Heart left ventricle (tissue), 16 donors: ENCODE measurements at regions of chrX and their contacts with region 1.

Region 1: DNA sequence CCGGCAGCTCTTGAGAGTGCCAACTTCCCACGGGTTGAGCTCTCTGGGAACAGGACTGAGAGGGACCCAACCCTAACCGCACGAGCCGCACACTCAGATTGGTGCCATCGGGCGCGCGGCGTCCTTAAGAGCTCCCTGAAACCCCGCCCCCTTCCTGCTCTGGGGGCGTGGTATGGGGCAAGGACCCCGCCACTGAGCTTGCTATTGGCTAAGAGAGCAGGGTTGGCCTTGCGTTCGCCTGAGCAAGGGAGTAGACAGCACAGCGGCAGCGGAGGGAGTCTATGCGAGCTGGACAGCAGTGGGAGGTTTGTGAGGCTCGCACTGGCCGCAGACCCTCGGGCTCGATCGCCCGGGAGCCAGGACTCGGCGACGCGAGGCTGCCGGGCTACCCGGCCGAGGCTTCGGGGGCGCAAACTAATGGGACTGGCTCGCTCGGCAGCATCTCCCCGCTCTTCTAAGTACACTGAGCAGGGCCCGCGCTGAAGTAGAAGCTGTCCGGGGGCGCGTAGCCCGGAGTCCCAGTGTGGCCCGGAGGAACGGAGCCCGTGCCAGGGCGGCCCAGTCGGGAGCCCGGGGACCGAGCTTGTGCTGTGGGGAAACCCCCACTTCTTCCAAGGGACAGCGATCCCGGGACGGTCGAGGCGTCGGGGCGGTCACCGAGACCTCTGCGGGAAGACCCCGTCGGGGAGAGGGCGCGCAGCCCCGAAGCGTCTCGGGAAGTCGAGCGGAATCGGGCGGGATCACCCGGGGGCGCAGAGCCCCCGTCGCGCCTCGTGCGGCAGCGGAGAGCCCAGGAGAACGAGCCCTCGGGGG is at the start of gene EFNB1:
- DNase-seq: peak; percentile 91 to 95 (median 93)
- ATAC-seq: peak; percentile 93 to 96 (median 94)
- H3K4me3 ChIP-seq: peak within 1 kb of the TSS; percentile 63 to 98 (median 81)
- H3K27ac ChIP-seq: peak within 1 kb of the TSS; percentile 65 to 92 (median 85)
- H3K4me1 ChIP-seq: peaks cover 0 to 22% (median 4%) of the 10 kb centered on the region in 12 donors
- H3K27me3 ChIP-seq: peaks cover 0 to 25% (median 0%) of the 10 kb centered on the region in 9 donors
- CTCF ChIP-seq: no peak
- POLR2A ChIP-seq: peak; percentile 72 to 99
- total RNA-seq, gene EFNB1: 15.9 to 78.8 (median 23.1) TPM

Region 2: DNA sequence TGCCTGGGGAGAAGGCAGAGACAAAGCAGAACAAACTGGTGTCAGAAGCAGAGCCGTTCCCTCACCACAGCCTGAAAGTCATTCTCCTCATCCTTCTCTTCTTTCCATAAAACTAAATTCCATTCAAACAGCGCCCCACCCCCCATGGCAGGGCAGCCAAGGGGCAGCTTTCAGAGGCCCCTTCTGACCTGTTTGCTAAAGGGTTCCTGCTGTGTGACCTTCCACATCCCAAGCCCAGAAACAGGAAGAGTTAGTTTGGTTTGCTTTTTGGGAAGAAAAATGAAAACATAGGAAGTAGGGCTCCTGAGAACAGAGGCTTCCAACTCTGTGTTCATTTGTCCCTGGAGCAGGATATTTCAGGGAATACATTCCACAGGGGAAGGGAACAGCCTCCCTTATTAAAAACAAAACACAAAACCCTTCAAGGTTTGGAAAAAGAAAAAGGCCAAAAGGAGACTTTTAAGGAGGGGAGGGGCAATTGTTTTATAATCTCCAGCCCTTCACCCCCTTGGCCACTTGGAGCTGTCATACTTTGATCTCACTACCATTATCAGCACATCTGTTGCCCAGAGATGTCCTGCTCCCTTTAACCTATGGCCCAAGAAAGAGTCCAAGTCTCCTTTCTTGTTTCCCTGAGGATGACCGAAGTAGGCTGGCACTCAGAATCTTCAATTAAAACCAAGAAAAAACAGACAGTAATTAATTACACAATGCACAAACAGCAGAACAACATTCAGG is 156.2 kb before region 1 on chrX:
- intact Hi-C with region 1: no loop called
- DNase-seq: peak in 3 of 5 donors; percentile 27 to 63 (median 35)
- ATAC-seq: peak; percentile 47 to 76 (median 64)
- H3K4me3 ChIP-seq: no peak overlapping the region
- H3K27ac ChIP-seq: peak overlapping the region in 11 of 12 donors; percentile 14 to 56 (median 38)
- H3K4me1 ChIP-seq: peaks cover 0 to 30% (median 4%) of the 10 kb centered on the region in 12 donors
- H3K27me3 ChIP-seq: peaks cover 0 to 3% (median 0%) of the 10 kb centered on the region in 9 donors
- CTCF ChIP-seq: no peak
- POLR2A ChIP-seq: no peak

Region 3: GRCh38 chrX:68880846-68881552 is 52.1 kb after region 1 on chrX:
- intact Hi-C with region 1: loop called in 1 of 10 experiments (anchors 10 kb)
- DNase-seq: no peak
- ATAC-seq: peak in 1 of 4 donors; percentile 16
- H3K4me3 ChIP-seq: no peak overlapping the region
- H3K27ac ChIP-seq: no peak overlapping the region
- H3K4me1 ChIP-seq: peaks cover 0 to 7% (median 0%) of the 10 kb centered on the region in 12 donors
- H3K27me3 ChIP-seq: peaks cover 0 to 14% (median 0%) of the 10 kb centered on the region in 9 donors
- CTCF ChIP-seq: no peak
- POLR2A ChIP-seq: no peak

Region 4: DNA sequence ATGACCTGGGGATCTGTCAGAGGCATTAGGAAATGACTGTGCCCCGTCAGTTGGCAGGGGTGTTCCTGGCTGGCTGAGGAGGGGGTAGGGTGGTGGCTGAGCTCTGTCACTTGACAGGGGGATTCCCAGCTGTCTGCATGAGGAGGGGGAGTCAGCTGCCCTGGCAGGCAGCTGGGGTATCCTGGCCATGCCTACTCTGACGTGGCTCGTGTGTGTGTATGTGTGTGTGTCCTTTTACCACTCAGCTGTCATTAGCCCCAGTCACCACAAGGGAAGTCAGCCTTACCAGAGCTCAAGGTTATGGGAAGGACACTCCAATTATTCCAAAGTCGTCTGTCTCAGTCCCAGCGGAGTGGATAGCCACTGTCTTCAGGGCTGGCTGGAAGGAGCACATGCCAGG is 93.1 kb after region 1 on chrX:
- intact Hi-C with region 1: loop called in 2 of 10 experiments (anchors 5 to 10 kb)
- DNase-seq: peak in 1 of 5 donors; percentile 32
- ATAC-seq: peak; percentile 10 to 69 (median 46)
- H3K4me3 ChIP-seq: no peak overlapping the region
- H3K27ac ChIP-seq: no peak overlapping the region
- H3K4me1 ChIP-seq: peaks cover 0 to 4% (median 0%) of the 10 kb centered on the region in 12 donors
- H3K27me3 ChIP-seq: no peaks in the 10 kb centered on the region
- CTCF ChIP-seq: peak in 1 of 12 donors; percentile 13
- POLR2A ChIP-seq: no peak

Region 5: DNA sequence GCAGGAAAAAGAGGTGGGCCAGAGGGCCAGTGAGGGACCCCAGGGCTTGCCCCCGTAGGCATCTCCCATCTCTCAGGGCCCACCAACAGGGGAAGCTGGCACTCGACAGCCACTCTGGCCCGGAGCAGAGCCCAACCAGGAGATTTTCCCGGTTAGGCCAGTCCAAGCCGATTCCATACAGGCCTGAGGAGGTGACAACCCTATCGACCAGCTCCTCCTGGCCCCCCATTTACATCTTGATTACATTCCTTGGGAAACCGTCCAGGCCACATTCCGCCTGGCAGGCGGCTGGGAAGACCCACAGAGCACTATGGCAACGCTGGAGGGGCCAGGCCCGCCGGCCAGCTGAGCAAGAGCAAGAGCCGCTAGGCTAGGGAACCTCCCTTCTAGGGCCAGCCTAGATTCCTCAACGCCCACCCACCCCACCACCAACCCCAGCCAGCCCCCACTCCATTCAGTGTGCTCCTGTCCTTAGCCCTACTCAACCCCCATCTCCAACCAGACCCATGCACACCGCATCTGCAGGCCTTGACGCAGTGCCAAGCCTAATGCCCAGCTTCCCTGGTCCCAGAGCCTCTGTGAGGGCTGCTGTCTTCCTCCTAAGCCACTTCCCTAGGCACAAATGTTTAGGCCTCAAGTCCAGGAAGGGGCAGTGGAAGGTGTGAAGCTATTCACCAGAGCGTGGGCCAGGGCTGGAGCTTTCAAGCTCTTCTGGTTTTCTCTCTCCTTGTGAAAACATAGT is 161.1 kb after region 1 on chrX:
- intact Hi-C with region 1: loop called in 4 of 10 experiments (anchors 5 to 10 kb)
- DNase-seq: peak; percentile 41 to 63 (median 48)
- ATAC-seq: peak; percentile 72 to 87 (median 80)
- H3K4me3 ChIP-seq: no peak overlapping the region
- H3K27ac ChIP-seq: peak overlapping the region in 7 of 12 donors; percentile 20 to 57 (median 33)
- H3K4me1 ChIP-seq: peaks cover 0 to 34% (median 12%) of the 10 kb centered on the region in 12 donors
- H3K27me3 ChIP-seq: peaks cover 0 to 11% (median 0%) of the 10 kb centered on the region in 9 donors
- CTCF ChIP-seq: no peak
- POLR2A ChIP-seq: no peak

Region 6: DNA sequence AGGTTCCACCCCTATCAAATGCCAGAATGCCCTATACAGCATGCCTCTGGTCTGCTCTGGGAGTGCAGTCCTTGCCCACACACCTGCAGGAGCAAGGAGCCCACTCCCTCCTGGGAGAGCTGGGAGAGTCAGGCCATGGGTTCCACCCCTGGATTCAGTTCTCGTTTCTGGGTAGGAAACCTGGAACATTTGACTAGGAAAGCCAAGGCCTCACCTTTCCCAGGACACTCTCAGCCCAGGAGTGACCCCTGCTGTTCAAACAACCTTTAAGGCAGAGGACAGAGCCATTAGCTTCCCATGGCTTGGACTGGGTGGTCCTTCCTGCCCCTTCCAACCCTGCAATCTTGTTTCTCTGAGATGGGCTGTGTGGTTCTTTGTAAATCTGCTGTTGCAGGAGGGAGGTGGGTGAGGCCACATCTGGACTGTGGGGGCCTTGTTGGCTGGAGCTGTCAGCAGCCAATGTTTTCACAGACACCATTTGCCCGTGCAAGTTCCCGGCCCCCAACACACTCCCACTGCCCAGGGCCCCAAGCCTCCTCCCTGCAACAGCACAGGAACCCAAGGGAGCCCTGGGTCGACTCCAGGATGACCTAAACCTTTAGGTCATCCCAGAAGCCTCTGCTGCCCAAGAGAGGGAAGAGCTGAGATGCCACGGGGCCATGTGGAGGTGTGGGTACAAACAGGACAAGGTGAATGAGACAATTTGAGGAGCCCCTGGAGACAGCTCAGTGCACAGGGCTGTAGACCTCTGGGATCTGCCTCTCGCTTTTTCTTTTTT is 231.9 kb after region 1 on chrX:
- intact Hi-C with region 1: loop called (anchors 1 to 5 kb)
- DNase-seq: peak in 4 of 5 donors; percentile 38 to 54 (median 43)
- ATAC-seq: peak; percentile 61 to 91 (median 80)
- H3K4me3 ChIP-seq: no peak overlapping the region
- H3K27ac ChIP-seq: no peak overlapping the region
- H3K4me1 ChIP-seq: peaks cover 0 to 6% (median 0%) of the 10 kb centered on the region in 12 donors
- H3K27me3 ChIP-seq: peaks cover 0 to 18% (median 0%) of the 10 kb centered on the region in 9 donors
- CTCF ChIP-seq: peak; percentile 14 to 63 (median 49)
- POLR2A ChIP-seq: no peak

Region 7: DNA sequence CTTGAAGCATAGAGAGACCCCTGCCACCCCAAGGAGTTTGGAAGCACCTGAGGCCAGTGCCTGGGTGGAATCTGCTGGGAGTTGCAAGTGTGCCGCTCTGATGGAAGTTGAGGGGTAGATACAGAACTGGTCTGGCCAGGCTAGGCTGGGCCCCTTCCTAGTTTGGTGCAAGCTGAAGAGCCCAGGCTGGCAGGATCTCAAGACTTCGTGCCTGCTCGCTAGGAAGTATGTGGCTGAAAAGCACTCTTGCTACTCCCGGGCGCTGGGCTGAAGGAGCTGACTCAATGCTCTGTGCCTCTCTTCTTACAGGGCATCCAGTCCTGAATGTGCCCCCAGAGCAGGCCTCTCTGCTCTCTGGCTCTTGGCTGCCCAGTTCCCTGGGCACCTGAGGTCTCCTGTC is 388.0 kb after region 1 on chrX:
- intact Hi-C with region 1: loop called in 8 of 10 experiments (anchors 1 to 5 kb)
- DNase-seq: no peak
- ATAC-seq: peak in 1 of 4 donors; percentile 24
- H3K4me3 ChIP-seq: no peak overlapping the region
- H3K27ac ChIP-seq: peak overlapping the region in 1 of 12 donors; percentile 16
- H3K4me1 ChIP-seq: peaks cover 0 to 6% (median 0%) of the 10 kb centered on the region in 12 donors
- H3K27me3 ChIP-seq: peaks cover 0 to 11% (median 0%) of the 10 kb centered on the region in 9 donors
- CTCF ChIP-seq: no peak
- POLR2A ChIP-seq: no peak

Region 8: DNA sequence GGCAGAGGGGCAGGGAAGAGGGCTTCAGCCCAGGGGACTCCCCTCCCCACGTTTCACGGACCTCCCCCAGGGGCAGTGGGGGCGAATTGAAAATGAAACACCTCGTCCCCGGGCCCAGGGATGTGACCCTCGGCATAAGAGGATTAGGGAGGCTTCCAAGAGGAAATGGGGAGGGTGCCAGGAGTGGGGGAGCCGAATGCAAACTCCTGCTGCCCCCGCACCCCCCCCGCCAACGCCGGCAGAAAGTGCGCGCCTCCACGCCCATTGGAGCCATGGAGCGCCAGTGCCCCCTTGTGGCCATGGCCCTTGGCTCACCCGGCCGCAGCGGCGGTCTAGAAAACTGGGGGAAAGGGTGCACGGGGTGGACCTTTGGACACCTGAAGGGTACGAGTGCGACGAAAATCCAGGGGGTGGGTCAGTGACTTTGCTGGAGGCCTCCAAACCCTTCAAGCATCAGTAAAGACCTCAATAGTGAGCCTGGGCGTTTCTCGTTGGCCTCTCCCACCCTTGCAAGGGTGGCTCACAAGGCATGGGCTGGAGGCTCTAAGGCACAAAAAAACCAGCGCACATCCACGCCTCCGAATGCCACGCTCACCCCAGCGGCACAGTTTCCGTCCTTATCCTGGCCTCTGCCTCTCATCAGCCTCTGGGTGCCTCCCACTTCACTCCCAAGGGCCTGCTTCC is 457.1 kb after region 1 on chrX:
- intact Hi-C with region 1: loop called (anchors 2 to 5 kb)
- DNase-seq: peak in 4 of 5 donors; percentile 52 to 73 (median 64)
- ATAC-seq: peak; percentile 67 to 86 (median 77)
- H3K4me3 ChIP-seq: peak overlapping the region in 11 of 12 donors; percentile 30 to 60 (median 46)
- H3K27ac ChIP-seq: peak overlapping the region in 3 of 12 donors; percentile 18 to 65 (median 38)
- H3K4me1 ChIP-seq: peaks cover 0 to 20% (median 5%) of the 10 kb centered on the region in 12 donors
- H3K27me3 ChIP-seq: peaks cover 0 to 25% (median 0%) of the 10 kb centered on the region in 9 donors
- CTCF ChIP-seq: peak; percentile 67 to 89 (median 81)
- POLR2A ChIP-seq: no peak